Activated T-helper 2 cell treated with anti-CD3 and anti-CD28 coated beads, Interferon-gamma antibody, Interleukin-2, Interleukin-4, amounts not matched to agents 10 μg/mL and 5 μg/mL and 100 μg/mL, durations not matched to agents 14 hours and 24 hours and 36 hours (primary cell): ENCODE measurements at regions of chr17 and their contacts with region 1.

Region 1: GRCh38 chr17:17303010-17303846 is at the start of gene NT5M:
- DNase-seq: peak; percentile 71
- H3K4me3 Mint-ChIP-seq: peak within 1 kb of the TSS; percentile 88
- H3K27ac Mint-ChIP-seq: peak within 1 kb of the TSS; percentile 87
- H3K4me1 Mint-ChIP-seq: peaks cover 38% of the 10 kb centered on the region
- H3K27me3 Mint-ChIP-seq: no peaks in the 10 kb centered on the region
- total RNA-seq, gene NT5M: 8.1 and 9.5 TPM in 2 replicates

Region 2: DNA sequence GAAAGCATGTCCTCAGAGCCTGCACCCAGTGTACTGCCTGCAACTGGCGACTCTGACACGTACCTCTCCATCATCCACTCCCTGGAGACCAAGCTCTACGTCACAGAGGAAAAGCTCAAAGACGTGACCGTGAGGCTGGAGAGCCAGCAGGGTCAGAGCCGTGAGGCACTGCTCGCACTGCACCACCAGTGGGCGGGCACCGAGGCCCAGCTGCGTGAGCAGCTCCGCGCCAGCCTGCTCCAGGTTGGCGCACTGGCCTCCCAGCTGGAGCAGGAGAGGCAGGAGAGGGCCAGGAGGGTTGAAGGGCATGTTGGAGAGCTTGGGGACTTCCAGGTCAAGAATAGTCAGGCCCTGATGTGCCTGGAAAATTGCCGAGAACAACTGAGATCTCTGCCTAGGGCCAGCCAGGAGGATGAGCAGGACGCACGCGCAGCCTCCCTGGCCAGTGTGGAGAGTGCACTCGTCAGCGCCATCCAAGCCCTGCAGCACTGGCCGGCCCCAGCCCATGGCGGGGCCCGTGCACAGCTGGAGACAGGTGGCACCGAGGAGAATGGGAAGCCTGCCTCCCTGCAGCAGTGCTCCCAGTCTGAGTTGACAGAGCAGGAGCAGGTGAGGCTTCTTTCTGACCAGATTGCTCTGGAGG is 137.4 kb before region 1 on chr17:
- intact Hi-C with region 1: no loop called
- DNase-seq: no peak
- H3K4me3 Mint-ChIP-seq: no peak overlapping the region
- H3K27ac Mint-ChIP-seq: no peak overlapping the region
- H3K4me1 Mint-ChIP-seq: peaks cover 7% of the 10 kb centered on the region
- H3K27me3 Mint-ChIP-seq: no peaks in the 10 kb centered on the region

Region 3: GRCh38 chr17:17258998-17259397 is 44.2 kb before region 1 on chr17:
- intact Hi-C with region 1: no loop called
- DNase-seq: no peak
- H3K4me3 Mint-ChIP-seq: no peak overlapping the region
- H3K27ac Mint-ChIP-seq: no peak overlapping the region
- H3K4me1 Mint-ChIP-seq: no peaks in the 10 kb centered on the region
- H3K27me3 Mint-ChIP-seq: no peaks in the 10 kb centered on the region

Region 4: DNA sequence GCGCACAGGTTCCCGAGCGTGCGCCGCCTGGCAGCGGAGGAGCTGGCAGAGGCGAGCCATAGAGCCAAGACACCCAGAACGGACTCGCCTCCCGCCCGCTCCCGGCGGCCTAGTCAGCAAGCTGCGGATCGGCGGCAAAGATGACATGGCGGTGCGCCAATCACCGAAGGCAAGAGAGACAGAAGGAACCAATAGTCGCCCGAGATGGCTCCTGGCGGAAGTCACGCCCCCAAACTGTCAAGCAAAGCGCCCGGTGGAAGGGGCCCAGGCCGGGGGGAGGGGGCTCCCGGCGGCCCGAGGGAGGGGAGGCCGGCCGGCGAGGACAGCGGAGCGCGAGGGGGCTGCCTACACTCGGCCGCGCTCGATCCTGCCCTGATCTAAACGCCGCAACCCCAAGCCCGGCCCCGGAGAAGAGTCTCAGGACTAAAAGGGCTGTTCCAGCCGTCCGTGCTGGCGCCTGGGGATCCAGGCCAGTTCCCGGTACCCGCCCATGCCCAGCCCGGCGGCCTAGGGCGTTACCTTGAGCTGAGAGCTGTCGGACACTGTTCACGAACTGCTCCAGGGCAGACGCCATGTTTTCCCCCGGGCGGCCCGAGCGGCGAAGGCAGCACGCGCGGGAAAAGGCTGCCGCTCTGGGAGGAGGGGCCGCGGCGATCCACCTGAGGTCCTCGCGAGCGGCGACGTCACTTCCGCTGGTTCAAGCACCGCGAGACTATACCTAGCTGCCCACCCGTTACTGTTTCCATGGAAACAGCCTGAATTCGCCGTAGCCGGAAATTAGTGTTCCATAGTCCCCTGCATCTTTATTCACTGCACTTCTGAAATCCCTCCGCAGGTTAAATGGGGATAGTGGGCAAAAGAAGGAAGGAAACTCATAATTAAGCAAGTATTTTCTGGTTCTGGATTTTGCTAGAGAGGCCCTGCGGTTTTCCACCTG is 22.3 kb before region 1 on chr17 and contains the start of gene COPS3:
- intact Hi-C with region 1: loop called (anchors 1 kb)
- DNase-seq: peak; percentile 96
- H3K4me3 Mint-ChIP-seq: peak within 1 kb of the TSS; percentile 90
- H3K27ac Mint-ChIP-seq: peak within 1 kb of the TSS; percentile 94
- H3K4me1 Mint-ChIP-seq: peaks cover 30% of the 10 kb centered on the region
- H3K27me3 Mint-ChIP-seq: no peaks in the 10 kb centered on the region
- total RNA-seq, gene COPS3: 102 and 106 TPM in 2 replicates

Region 5: DNA sequence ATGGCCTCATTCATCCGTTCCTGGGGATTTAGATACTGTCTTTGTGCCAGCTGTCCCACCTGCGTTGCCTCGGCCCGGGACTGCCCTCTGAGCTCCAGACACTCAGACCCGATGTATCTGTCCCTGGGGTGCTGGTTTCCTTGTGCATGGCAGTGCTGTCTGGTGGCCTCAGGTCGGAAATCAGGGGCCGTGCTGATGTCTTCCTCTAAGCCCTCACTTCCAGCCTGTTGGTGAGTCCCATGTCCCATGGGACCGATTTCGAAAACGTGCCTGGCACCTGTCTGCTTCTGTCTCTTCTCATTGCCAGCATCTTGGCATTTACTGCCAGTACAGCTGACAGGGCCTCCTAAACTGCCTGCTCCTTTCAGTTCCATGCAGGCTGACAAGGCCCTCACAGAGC is 22.0 kb after region 1 on chr17:
- intact Hi-C with region 1: no loop called
- DNase-seq: no peak
- H3K4me3 Mint-ChIP-seq: no peak overlapping the region
- H3K27ac Mint-ChIP-seq: peak overlapping the region; percentile 34
- H3K4me1 Mint-ChIP-seq: no peaks in the 10 kb centered on the region
- H3K27me3 Mint-ChIP-seq: no peaks in the 10 kb centered on the region

Region 6: DNA sequence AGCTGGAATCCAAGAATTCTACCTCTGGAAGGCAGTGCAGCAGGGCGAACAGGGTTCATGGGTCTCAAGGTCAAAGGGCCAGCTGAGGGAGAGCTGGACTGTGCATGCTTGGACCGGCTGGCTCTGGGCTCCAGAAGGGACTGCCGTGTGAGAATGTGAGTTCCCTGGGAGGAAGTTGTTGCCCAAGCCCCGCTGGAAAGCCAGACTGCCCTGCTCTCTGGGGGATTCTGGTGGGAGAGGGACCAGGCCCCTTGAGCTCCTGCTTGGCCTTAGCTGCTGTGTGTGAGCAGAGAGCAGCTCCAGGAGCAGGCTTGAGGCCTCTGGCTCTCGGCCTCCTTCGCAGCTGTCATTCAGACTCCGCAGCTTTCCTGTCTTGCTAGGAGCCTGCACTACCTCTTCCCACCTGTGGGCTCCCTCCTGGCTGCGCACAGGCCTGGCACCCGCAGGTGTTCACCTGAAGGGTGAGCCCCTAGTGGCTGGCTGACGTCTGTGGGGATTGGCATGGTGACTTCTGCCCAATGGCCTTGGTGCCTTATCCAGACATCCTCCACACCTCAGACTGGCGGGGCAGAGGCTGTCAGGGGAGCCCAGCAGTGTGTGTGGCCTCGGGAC is 84.7 kb after region 1 on chr17:
- intact Hi-C with region 1: no loop called
- DNase-seq: no peak
- H3K4me3 Mint-ChIP-seq: no peak overlapping the region
- H3K27ac Mint-ChIP-seq: no peak overlapping the region
- H3K4me1 Mint-ChIP-seq: peaks cover 14% of the 10 kb centered on the region
- H3K27me3 Mint-ChIP-seq: peaks cover 9% of the 10 kb centered on the region

Region 7: DNA sequence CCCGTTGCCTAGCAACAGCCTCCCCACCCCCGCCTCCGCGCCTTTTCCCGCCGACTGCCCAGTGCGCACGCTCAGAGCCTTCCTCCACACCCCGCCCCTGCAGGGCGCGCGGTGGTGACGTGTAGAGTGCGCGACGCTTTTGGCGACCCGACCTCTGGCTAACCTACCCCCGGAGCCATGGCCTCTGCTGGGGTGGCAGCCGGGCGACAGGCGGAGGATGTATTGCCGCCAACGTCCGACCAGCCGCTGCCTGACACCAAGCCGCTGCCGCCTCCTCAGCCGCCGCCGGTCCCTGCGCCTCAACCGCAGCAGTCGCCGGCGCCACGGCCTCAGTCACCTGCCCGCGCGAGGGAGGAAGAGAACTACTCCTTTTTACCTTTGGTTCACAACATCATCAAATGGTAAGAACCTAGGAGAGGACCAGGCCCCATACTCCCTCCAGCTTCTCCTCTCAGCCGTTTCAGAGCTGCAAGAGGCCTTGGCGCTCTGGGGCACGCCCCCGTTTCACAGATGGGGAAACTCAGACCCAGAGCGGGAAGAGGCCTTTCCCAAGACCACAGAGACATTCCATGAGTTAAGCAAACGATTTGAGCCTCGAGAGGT is 173.7 kb after region 1 on chr17 and contains the start of gene MED9:
- intact Hi-C with region 1: loop called (anchors 5 kb)
- DNase-seq: peak; percentile 90
- H3K4me3 Mint-ChIP-seq: peak within 1 kb of the TSS; percentile 90
- H3K27ac Mint-ChIP-seq: peak within 1 kb of the TSS; percentile 79
- H3K4me1 Mint-ChIP-seq: peaks cover 32% of the 10 kb centered on the region
- H3K27me3 Mint-ChIP-seq: peaks cover 8% of the 10 kb centered on the region
- total RNA-seq, gene MED9: 12.6 and 13.1 TPM in 2 replicates